ENCODE measurements at regions of chr16 and their contacts with region 1.

Region 1: GRCh38 chr16:74862741-74863244 is 88.2 kb upstream of the FA2H start:
- DNase-seq: peak in 4 of 14 experiments; percentile 14 to 64 (median 58)
- ATAC-seq: no peak
- H3K4me3 ChIP-seq: no peak overlapping the region
- H3K4me3 Mint-ChIP-seq: no peak overlapping the region
- H3K27ac ChIP-seq: no peak overlapping the region
- H3K27ac Mint-ChIP-seq: peak overlapping the region; percentile 63
- H3K4me1 ChIP-seq: peaks cover 6% of the 10 kb centered on the region
- H3K4me1 Mint-ChIP-seq: peaks cover 12% of the 10 kb centered on the region
- H3K27me3 ChIP-seq: no peaks in the 10 kb centered on the region
- H3K27me3 Mint-ChIP-seq: no peaks in the 10 kb centered on the region
- CTCF ChIP-seq: peak; percentile 81

Region 2: GRCh38 chr16:74813109-74813641 is 49.6 kb before region 1 on chr16:
- CTCF ChIA-PET with region 1: interaction called, 23 read pairs
- POLR2A ChIA-PET with region 1: no interaction called
- intact Hi-C with region 1: loop called (anchors 2 kb)
- DNase-seq: peak; percentile 50 to 84 (median 66)
- ATAC-seq: peak; percentile 99
- H3K4me3 ChIP-seq: no peak overlapping the region
- H3K4me3 Mint-ChIP-seq: no peak overlapping the region
- H3K27ac ChIP-seq: no peak overlapping the region
- H3K27ac Mint-ChIP-seq: no peak overlapping the region
- H3K4me1 ChIP-seq: peaks cover 6% of the 10 kb centered on the region
- H3K4me1 Mint-ChIP-seq: no peaks in the 10 kb centered on the region
- H3K27me3 ChIP-seq: no peaks in the 10 kb centered on the region
- H3K27me3 Mint-ChIP-seq: no peaks in the 10 kb centered on the region
- CTCF ChIP-seq: peak; percentile 96

Region 3: GRCh38 chr16:75342308-75342829 is 479.6 kb after region 1 on chr16:
- CTCF ChIA-PET with region 1: no interaction called
- POLR2A ChIA-PET with region 1: no interaction called
- intact Hi-C with region 1: no loop called
- DNase-seq: no peak
- ATAC-seq: no peak
- H3K4me3 ChIP-seq: no peak overlapping the region
- H3K4me3 Mint-ChIP-seq: no peak overlapping the region
- H3K27ac ChIP-seq: no peak overlapping the region
- H3K27ac Mint-ChIP-seq: no peak overlapping the region
- H3K4me1 ChIP-seq: no peaks in the 10 kb centered on the region
- H3K4me1 Mint-ChIP-seq: no peaks in the 10 kb centered on the region
- H3K27me3 ChIP-seq: no peaks in the 10 kb centered on the region
- H3K27me3 Mint-ChIP-seq: no peaks in the 10 kb centered on the region
- CTCF ChIP-seq: no peak

Measured in CD4-positive, alpha-beta T cell (primary cell).